Endothelial cell of umbilical vein (primary cell): ENCODE measurements at regions of chr15 and their contacts with region 1.

Region 1: DNA sequence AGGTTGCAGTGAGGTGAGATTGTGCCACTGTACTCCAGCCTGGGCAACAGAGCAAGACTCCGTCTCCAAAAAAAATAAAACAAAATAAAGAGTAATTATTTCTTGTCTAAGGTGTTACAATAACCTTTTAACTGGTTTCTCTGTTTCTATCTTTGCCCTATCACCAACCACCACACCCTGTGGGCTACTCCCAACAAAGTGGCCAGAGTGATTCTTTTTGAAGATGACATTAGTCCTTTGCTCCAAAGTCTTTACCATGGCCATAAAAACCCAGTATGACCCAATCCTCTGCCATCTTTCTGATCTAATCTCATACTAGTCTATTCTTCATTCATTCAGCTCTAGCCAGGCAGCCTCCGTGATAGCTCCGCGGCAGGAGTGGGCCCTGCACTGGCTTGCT is 62.8 kb downstream of the RFX7 start:
- DNase-seq: no peak
- H3K4me3 ChIP-seq: no peak overlapping the region
- H3K27ac ChIP-seq: no peak overlapping the region
- H3K4me1 ChIP-seq: no peaks in the 10 kb centered on the region
- H3K27me3 ChIP-seq: no peaks in the 10 kb centered on the region
- CTCF ChIP-seq: no peak
- POLR2A ChIP-seq: no peak

Region 2: GRCh38 chr15:55637086-55637485 is 543.8 kb before region 1 on chr15:
- CTCF ChIA-PET with region 1: no interaction called
- POLR2A ChIA-PET with region 1: no interaction called
- dilution Hi-C with region 1: no loop called
- intact Hi-C with region 1: no loop called
- DNase-seq: no peak
- H3K4me3 ChIP-seq: no peak overlapping the region
- H3K27ac ChIP-seq: no peak overlapping the region
- H3K4me1 ChIP-seq: no peaks in the 10 kb centered on the region
- H3K27me3 ChIP-seq: no peaks in the 10 kb centered on the region
- CTCF ChIP-seq: no peak
- POLR2A ChIP-seq: no peak

Region 3: GRCh38 chr15:56168394-56168793 is 12.5 kb before region 1 on chr15:
- CTCF ChIA-PET with region 1: no interaction called
- POLR2A ChIA-PET with region 1: no interaction called
- dilution Hi-C with region 1: no loop called
- intact Hi-C with region 1: loop called (anchors 1 kb)
- DNase-seq: no peak
- H3K4me3 ChIP-seq: no peak overlapping the region
- H3K27ac ChIP-seq: no peak overlapping the region
- H3K4me1 ChIP-seq: peaks cover 5% of the 10 kb centered on the region
- H3K27me3 ChIP-seq: no peaks in the 10 kb centered on the region
- CTCF ChIP-seq: no peak
- POLR2A ChIP-seq: no peak

Region 4: GRCh38 chr15:56207092-56207491 is 26.2 kb after region 1 on chr15:
- CTCF ChIA-PET with region 1: no interaction called
- POLR2A ChIA-PET with region 1: no interaction called
- dilution Hi-C with region 1: no loop called
- intact Hi-C with region 1: no loop called
- DNase-seq: no peak
- H3K4me3 ChIP-seq: no peak overlapping the region
- H3K27ac ChIP-seq: no peak overlapping the region
- H3K4me1 ChIP-seq: peaks cover 4% of the 10 kb centered on the region
- H3K27me3 ChIP-seq: no peaks in the 10 kb centered on the region
- CTCF ChIP-seq: no peak
- POLR2A ChIP-seq: no peak

Region 5: DNA sequence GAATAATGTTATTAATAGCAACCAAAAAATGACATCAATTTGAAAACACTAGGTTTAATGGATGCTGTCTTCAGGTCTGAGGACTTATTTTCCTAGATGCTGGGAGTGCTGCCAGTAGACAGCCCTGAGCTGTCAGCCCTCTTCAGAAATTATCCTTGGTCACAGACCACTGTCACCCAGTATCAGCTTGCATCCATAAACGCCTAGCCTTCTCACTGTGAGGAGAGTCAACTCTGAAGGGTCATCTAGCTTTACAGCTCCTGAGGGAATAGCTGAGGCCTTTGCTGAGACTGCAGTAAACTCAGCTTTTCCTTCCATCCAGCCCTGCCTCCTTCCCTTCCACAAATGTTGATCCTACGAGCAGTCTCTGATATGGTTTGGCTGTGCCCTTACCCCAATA is 303.4 kb after region 1 on chr15:
- CTCF ChIA-PET with region 1: no interaction called
- POLR2A ChIA-PET with region 1: no interaction called
- dilution Hi-C with region 1: no loop called
- intact Hi-C with region 1: no loop called
- DNase-seq: no peak
- H3K4me3 ChIP-seq: no peak overlapping the region
- H3K27ac ChIP-seq: no peak overlapping the region
- H3K4me1 ChIP-seq: no peaks in the 10 kb centered on the region
- H3K27me3 ChIP-seq: peaks cover 7 to 13% of the 10 kb centered on the region in 2 experiments
- CTCF ChIP-seq: no peak
- POLR2A ChIP-seq: no peak